ENCODE measurements at regions of chr2 and their contacts with region 1.

Region 1: DNA sequence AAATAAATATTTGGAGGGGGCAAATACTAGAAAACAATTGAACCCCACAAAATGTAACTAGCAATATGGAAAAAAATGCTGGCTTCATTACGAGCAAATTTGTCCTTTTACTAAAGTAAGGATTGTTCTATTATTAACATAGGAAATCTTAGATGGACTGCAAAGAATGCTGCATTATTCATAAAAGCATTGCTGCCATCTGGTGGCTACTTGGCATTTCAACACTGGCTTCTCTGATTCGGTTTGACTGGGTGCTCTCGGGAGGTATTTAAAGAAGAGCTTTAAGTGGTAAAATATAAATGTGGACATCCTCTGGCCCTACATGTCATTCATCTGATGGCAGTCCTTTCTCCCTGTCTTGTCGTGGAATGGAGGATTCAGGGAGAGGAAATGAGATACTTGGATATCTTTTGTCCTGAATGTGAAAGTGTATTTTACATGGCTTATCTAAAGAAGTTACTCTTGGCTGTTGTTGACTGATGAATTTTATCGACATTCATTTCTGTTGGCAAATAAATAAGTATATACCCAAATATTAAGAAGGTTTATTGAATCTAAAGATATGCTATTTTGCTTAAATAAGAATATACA is 130.2 kb downstream of the ARHGAP15 start:
- DNase-seq: peak; percentile 42 to 89 (median 72)
- ATAC-seq: peak; percentile 32
- H3K4me3 ChIP-seq: peak overlapping the region in 1 of 2 experiments; percentile 33
- H3K4me3 Mint-ChIP-seq: peak overlapping the region; percentile 74
- H3K27ac ChIP-seq: peak overlapping the region in 1 of 2 experiments; percentile 74
- H3K27ac Mint-ChIP-seq: peak overlapping the region; percentile 83
- H3K4me1 ChIP-seq: peaks cover 68% of the 10 kb centered on the region
- H3K4me1 Mint-ChIP-seq: peaks cover 77% of the 10 kb centered on the region
- H3K27me3 ChIP-seq: no peaks in the 10 kb centered on the region
- H3K27me3 Mint-ChIP-seq: no peaks in the 10 kb centered on the region
- CTCF ChIP-seq: peak; percentile 96

Region 2: DNA sequence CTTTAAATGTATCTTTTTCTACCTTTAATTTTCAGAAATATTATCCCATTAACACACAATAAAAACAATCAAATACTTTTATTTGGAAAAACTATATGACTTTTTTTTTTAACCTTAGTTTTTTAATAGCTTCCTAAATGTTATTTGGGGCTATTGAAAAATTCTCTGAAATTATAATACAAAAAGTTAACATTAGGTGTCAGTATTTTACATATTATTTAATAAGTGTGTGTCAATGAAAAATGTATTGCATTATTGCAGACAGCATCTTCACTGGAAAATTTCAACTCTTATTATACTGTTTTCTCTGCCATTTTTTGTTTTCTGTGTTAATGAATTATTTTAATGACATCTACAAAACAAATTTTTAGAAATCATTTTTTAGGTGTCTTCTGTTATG is 181.4 kb before region 1 on chr2:
- CTCF ChIA-PET with region 1: interaction called, 7 read pairs
- POLR2A ChIA-PET with region 1: no interaction called
- intact Hi-C with region 1: loop called in 1 of 2 experiments (anchors 1 kb)
- DNase-seq: no peak
- ATAC-seq: no peak
- H3K4me3 ChIP-seq: no peak overlapping the region
- H3K4me3 Mint-ChIP-seq: no peak overlapping the region
- H3K27ac ChIP-seq: no peak overlapping the region
- H3K27ac Mint-ChIP-seq: no peak overlapping the region
- H3K4me1 ChIP-seq: no peaks in the 10 kb centered on the region
- H3K4me1 Mint-ChIP-seq: no peaks in the 10 kb centered on the region
- H3K27me3 ChIP-seq: no peaks in the 10 kb centered on the region
- H3K27me3 Mint-ChIP-seq: no peaks in the 10 kb centered on the region
- CTCF ChIP-seq: peak; percentile 17

Region 3: GRCh38 chr2:143162123-143162837 is 97.2 kb before region 1 on chr2:
- CTCF ChIA-PET with region 1: interaction called, 137 read pairs
- POLR2A ChIA-PET with region 1: interaction called, 8 read pairs
- intact Hi-C with region 1: loop called (anchors 1 kb)
- DNase-seq: peak; percentile 22 to 85 (median 62)
- ATAC-seq: peak; percentile 99
- H3K4me3 ChIP-seq: no peak overlapping the region
- H3K4me3 Mint-ChIP-seq: no peak overlapping the region
- H3K27ac ChIP-seq: no peak overlapping the region
- H3K27ac Mint-ChIP-seq: peak overlapping the region; percentile 87
- H3K4me1 ChIP-seq: peaks cover 64% of the 10 kb centered on the region
- H3K4me1 Mint-ChIP-seq: peaks cover 88% of the 10 kb centered on the region
- H3K27me3 ChIP-seq: no peaks in the 10 kb centered on the region
- H3K27me3 Mint-ChIP-seq: no peaks in the 10 kb centered on the region
- CTCF ChIP-seq: peak; percentile 77

Region 4: DNA sequence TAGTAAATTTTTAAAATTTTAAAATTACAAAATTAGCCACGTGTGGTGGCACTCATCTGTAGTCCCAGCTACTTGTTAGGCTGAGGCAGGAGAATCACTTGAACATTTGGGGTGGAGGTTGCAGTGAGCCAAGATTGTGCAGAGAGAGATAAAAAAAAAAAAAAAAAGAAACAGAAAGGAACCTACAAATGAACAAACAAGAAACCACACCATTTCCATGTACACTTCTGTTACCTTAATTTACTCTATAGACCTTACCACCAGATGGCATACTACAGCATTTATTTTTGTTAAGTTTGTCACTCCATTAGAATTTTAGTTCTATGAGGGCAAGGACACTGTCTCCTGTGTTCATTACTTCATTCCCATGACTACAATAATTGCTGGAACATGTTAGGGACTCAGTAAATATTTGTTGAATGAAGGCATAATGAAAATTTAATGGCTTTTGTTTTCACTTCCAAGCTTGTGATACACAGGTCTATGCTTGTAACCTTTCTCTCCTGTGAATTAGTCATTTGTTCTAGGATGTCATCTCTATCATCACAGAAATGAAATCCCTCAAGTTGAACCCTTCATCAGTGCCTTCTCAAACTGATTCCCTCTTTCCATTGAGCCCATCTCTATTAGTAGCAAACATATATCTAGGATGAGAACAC is 54.2 kb before region 1 on chr2:
- CTCF ChIA-PET with region 1: interaction called, 17 read pairs
- POLR2A ChIA-PET with region 1: interaction called, 7 read pairs
- intact Hi-C with region 1: loop called (anchors 1 kb)
- DNase-seq: peak in 2 of 9 experiments; percentile 52 to 71
- ATAC-seq: peak; percentile 77
- H3K4me3 ChIP-seq: no peak overlapping the region
- H3K4me3 Mint-ChIP-seq: no peak overlapping the region
- H3K27ac ChIP-seq: peak overlapping the region in 1 of 2 experiments; percentile 53
- H3K27ac Mint-ChIP-seq: peak overlapping the region; percentile 69
- H3K4me1 ChIP-seq: peaks cover 21% of the 10 kb centered on the region
- H3K4me1 Mint-ChIP-seq: peaks cover 66% of the 10 kb centered on the region
- H3K27me3 ChIP-seq: no peaks in the 10 kb centered on the region
- H3K27me3 Mint-ChIP-seq: no peaks in the 10 kb centered on the region
- CTCF ChIP-seq: peak; percentile 52

Region 5: GRCh38 chr2:143230506-143231253 is 28.8 kb before region 1 on chr2:
- CTCF ChIA-PET with region 1: interaction called, 14 read pairs
- POLR2A ChIA-PET with region 1: interaction called, 5 read pairs
- intact Hi-C with region 1: no loop called
- DNase-seq: no peak
- ATAC-seq: no peak
- H3K4me3 ChIP-seq: no peak overlapping the region
- H3K4me3 Mint-ChIP-seq: no peak overlapping the region
- H3K27ac ChIP-seq: no peak overlapping the region
- H3K27ac Mint-ChIP-seq: peak overlapping the region; percentile 3
- H3K4me1 ChIP-seq: peaks cover 18% of the 10 kb centered on the region
- H3K4me1 Mint-ChIP-seq: peaks cover 39% of the 10 kb centered on the region
- H3K27me3 ChIP-seq: no peaks in the 10 kb centered on the region
- H3K27me3 Mint-ChIP-seq: no peaks in the 10 kb centered on the region
- CTCF ChIP-seq: no peak

Region 6: GRCh38 chr2:144320491-144320890 is 1061.0 kb after region 1 on chr2:
- CTCF ChIA-PET with region 1: no interaction called
- POLR2A ChIA-PET with region 1: no interaction called
- intact Hi-C with region 1: loop called in 1 of 2 experiments (anchors 5 kb)
- DNase-seq: peak in 8 of 9 experiments; percentile 41 to 87 (median 72)
- ATAC-seq: peak; percentile 53
- H3K4me3 ChIP-seq: no peak overlapping the region
- H3K4me3 Mint-ChIP-seq: peak overlapping the region; percentile 27
- H3K27ac ChIP-seq: peak overlapping the region in 1 of 2 experiments; percentile 64
- H3K27ac Mint-ChIP-seq: peak overlapping the region; percentile 86
- H3K4me1 ChIP-seq: peaks cover 29% of the 10 kb centered on the region
- H3K4me1 Mint-ChIP-seq: peaks cover 55% of the 10 kb centered on the region
- H3K27me3 ChIP-seq: no peaks in the 10 kb centered on the region
- H3K27me3 Mint-ChIP-seq: no peaks in the 10 kb centered on the region
- CTCF ChIP-seq: no peak

Measured in CD8-positive, alpha-beta T cell (primary cell).